HEK293T (cell line): ENCODE measurements at regions of chr17 and their contacts with region 1.

Region 1: GRCh38 chr17:57671667-57672632 is 73.1 kb downstream of the CCDC182 start:
- DNase-seq: peak; percentile 90

Region 2: DNA sequence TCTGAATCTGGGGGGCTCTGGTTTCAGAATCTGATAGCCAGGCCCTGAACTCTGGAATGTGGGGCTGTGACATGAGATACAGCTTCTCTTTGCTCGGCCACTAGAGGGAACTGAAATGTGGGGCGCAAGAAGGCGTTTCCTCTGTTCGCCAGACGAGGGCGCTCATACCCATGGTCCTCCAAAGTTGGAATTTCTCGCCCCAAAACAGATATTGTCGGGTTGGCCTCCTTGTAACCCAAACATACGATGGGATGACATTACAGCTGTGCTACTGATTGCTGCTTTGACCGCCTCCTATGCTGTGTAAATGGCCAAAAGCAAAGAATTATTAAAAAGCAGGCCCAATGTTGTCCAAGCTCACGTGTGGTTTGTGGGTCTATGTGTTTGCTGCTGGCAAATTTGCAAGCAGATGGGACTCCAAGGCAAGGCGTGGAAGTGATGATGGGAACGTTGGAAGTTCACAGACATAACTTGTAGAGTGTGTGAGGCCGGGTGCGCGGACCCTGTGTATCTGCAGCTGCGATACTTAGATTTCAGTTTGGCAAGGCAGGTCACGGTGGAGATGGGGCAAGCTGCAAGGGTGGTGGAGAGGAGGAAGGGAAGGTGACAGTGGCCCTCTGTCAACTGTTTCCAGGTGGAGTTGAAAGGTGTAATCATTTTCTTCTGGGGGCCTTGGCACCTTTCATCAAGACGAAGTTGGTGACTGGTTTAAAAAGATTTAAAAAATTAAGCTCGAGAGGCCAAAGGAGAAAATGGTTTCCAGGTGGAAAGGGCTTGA is 428.6 kb before region 1 on chr17:
- CTCF ChIA-PET with region 1: interaction called, 15 read pairs
- POLR2A ChIA-PET with region 1: interaction called, 3 read pairs
- DNase-seq: peak; percentile 86

Region 3: GRCh38 chr17:57552114-57552624 is 119.8 kb before region 1 on chr17:
- CTCF ChIA-PET with region 1: interaction called, 13 read pairs
- POLR2A ChIA-PET with region 1: no interaction called
- DNase-seq: peak; percentile 71

Region 4: DNA sequence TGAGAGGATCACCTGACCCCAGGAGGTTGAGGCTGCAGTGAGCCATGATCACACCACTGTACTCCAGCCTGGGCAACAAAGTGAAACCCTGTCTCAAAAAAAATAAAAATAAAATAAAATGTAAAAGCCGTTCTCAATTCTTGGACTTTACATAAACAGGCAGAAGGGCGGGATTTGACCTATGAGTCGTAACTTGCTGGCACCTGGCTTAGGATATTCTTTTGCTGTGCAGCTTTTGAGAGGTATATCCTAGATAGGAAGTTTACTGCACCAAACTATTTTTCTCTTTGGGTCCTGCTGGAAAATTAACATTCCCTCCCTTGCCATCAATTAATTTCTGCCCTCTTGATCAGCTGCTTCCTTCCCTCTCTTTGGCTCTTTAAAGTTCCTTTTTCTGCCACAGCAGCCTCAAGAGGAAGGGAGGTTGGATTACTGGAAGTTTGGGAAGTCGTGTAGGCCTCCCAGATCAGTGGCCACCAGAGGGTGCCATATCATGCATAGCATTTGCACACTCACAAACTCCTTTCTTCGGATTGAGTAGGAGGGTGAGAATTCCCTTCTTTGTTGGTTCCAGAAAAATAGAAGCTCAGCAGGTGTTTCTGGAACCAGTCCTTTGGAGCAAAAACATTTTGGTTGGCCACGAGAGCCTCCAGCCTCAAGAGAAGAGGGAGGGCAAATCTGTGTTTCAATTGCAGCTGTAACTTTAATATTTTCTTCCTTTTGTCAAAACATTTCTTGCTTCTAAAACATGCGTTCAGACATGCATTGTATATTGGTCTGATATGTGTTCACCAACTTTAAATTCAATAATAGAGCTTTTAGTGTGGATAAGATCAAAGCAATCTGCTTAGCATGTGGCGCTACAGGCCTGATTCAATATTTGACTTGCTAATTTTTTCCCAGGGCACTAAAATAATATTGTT is 74.2 kb before region 1 on chr17:
- CTCF ChIA-PET with region 1: interaction called, 12 read pairs
- POLR2A ChIA-PET with region 1: no interaction called
- DNase-seq: peak; percentile 78

Region 5: GRCh38 chr17:57833179-57833939 is 161.4 kb after region 1 on chr17:
- CTCF ChIA-PET with region 1: interaction called, 10 read pairs
- POLR2A ChIA-PET with region 1: no interaction called
- DNase-seq: peak; percentile 72